ENCODE measurements at regions of chr1 and their contacts with region 1.

Region 1: GRCh38 chr1:235415008-235415904 is 48.0 kb downstream of the TBCE start:
- DNase-seq: peak; percentile 59
- ATAC-seq: peak; percentile 83
- H3K4me3 ChIP-seq: no peak overlapping the region
- H3K27ac ChIP-seq: no peak overlapping the region
- H3K4me1 ChIP-seq: peaks cover 5 to 21% of the 10 kb centered on the region in 2 experiments; a peak in 3 of 4 replicates
- H3K27me3 ChIP-seq: no peaks in the 10 kb centered on the region
- CTCF ChIP-seq: peak; percentile 77 to 84 (median 80)
- POLR2A ChIP-seq: no peak
- RAD21 ChIP-seq: peak; percentile 79

Region 2: DNA sequence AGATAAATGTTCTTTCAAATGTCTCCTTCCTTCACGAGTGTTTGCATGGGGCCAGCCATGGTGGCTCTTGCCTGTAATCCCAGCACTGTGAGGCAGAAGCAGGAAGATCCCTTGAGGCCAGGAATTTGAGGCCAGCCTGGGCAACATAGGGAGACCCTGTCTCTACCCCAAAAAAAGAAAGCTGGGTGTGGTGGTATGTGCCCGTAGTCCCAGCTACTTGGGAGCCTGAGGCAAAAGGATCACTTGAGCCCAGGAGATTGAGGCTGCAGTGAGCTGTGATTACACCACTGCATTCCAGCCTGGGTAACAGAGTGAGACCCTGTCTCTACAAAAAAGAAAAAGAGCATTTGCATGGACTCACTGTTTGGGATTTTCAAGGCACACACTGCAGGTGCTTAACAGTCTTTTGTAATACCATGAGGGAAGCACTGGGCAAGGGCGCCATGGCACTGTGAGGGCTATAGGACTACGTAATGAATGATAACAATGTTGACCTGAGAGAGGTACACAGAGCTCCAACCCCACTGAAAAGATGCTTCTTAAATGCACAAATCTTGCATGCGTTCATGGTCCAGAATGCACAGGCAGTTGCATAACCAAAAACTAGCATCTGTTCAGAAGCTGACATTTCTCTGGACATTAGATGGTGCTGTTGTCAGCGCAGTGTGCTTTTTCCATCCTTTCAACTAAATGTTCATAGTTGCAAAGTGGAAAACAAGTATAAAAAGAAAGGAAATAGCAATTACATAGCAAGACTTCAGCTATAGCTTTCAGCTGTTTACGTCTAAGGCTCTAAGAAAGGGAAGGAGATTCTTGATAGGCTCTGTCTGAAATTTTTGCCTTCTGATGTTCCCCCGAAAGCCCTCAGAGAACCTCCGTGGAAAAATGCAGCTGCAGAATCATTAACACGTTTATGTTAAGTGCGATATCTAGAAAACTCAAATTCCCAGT is 928.5 kb before region 1 on chr1:
- CTCF ChIA-PET with region 1: no interaction called
- POLR2A ChIA-PET with region 1: no interaction called
- RAD21 ChIA-PET with region 1: no interaction called
- intact Hi-C with region 1: loop called (anchors 1 kb)
- DNase-seq: no peak
- ATAC-seq: peak; percentile 64; the same call in 1 of the 2 replicates
- H3K4me3 ChIP-seq: no peak overlapping the region
- H3K27ac ChIP-seq: no peak overlapping the region
- H3K4me1 ChIP-seq: no peaks in the 10 kb centered on the region
- H3K27me3 ChIP-seq: peaks cover 10% of the 10 kb centered on the region
- CTCF ChIP-seq: peak; percentile 46 to 64 (median 49); a peak in 4 of 6 replicates
- POLR2A ChIP-seq: no peak
- RAD21 ChIP-seq: peak; percentile 82

Region 3: GRCh38 chr1:235105051-235106043 is 309.9 kb before region 1 on chr1:
- CTCF ChIA-PET with region 1: interaction called, 36 read pairs
- POLR2A ChIA-PET with region 1: no interaction called
- RAD21 ChIA-PET with region 1: no interaction called
- intact Hi-C with region 1: loop called (anchors 1 kb)
- DNase-seq: no peak
- ATAC-seq: no peak
- H3K4me3 ChIP-seq: no peak overlapping the region
- H3K27ac ChIP-seq: no peak overlapping the region
- H3K4me1 ChIP-seq: peaks cover 4 to 14% of the 10 kb centered on the region in 2 experiments; a peak in 3 of 4 replicates
- H3K27me3 ChIP-seq: no peaks in the 10 kb centered on the region
- CTCF ChIP-seq: no peak
- POLR2A ChIP-seq: no peak
- RAD21 ChIP-seq: no peak

Region 4: GRCh38 chr1:235160957-235161684 is 254.1 kb before region 1 on chr1 and contains the start of gene RBM34:
- CTCF ChIA-PET with region 1: interaction called, 5 read pairs
- POLR2A ChIA-PET with region 1: no interaction called
- RAD21 ChIA-PET with region 1: no interaction called
- intact Hi-C with region 1: loop called (anchors 10 kb)
- DNase-seq: peak; percentile 71
- ATAC-seq: peak; percentile 92
- H3K4me3 ChIP-seq: peak within 1 kb of the TSS; percentile 73 to 80
- H3K27ac ChIP-seq: peak within 1 kb of the TSS; percentile 64
- H3K4me1 ChIP-seq: peaks cover 0 to 15% of the 10 kb centered on the region in 2 experiments; a peak in 2 of 4 replicates
- H3K27me3 ChIP-seq: no peaks in the 10 kb centered on the region
- CTCF ChIP-seq: 0 out of 6 replicates have a peak, but pooled peaks of 1 of the 3 experiments have one; percentile 14
- POLR2A ChIP-seq: peak; percentile 97
- RAD21 ChIP-seq: no peak
- total RNA-seq, gene RBM34: 82.0 TPM

Region 5: DNA sequence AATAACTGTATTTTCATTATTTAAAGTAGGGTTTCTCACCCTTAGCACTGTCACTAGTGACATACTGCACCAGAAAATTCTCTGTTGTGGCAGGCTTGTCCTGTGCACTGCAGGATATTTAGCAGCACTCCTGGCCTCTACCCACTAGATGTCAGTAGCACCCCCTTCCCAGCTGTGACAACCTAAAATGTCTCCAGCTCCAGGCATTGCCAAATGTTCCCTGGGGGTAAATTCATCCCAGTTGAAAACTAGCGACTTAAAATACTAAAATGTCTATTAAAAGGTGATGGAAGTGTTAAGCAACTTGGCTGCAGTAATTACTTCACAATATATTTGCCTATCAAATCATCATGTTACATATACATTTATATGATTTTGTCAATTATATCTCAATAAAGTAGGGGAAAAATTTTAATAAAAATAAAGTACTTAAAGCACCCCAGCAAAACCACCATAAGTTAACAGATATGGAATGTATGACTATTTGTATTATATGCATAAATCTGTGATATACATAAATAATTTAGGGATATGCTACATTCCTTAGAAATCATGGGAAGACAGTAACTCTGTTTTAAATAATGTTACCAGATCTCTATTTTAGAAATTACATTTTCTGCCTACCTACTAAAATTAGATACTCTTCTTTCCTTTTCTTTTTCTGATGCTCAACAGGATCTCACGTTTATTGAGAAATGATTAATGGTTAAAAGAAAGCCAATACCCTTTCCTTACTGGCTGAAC is 161.9 kb before region 1 on chr1:
- CTCF ChIA-PET with region 1: interaction called, 47 read pairs
- POLR2A ChIA-PET with region 1: no interaction called
- RAD21 ChIA-PET with region 1: interaction called in 1 of 2 experiments, 4 read pairs
- intact Hi-C with region 1: loop called (anchors 1 kb)
- DNase-seq: peak; percentile 54
- ATAC-seq: peak; percentile 100
- H3K4me3 ChIP-seq: no peak overlapping the region
- H3K27ac ChIP-seq: no peak overlapping the region
- H3K4me1 ChIP-seq: no peaks in the 10 kb centered on the region
- H3K27me3 ChIP-seq: no peaks in the 10 kb centered on the region
- CTCF ChIP-seq: peak; percentile 84 to 89 (median 87)
- POLR2A ChIP-seq: no peak
- RAD21 ChIP-seq: peak; percentile 89

Region 6: DNA sequence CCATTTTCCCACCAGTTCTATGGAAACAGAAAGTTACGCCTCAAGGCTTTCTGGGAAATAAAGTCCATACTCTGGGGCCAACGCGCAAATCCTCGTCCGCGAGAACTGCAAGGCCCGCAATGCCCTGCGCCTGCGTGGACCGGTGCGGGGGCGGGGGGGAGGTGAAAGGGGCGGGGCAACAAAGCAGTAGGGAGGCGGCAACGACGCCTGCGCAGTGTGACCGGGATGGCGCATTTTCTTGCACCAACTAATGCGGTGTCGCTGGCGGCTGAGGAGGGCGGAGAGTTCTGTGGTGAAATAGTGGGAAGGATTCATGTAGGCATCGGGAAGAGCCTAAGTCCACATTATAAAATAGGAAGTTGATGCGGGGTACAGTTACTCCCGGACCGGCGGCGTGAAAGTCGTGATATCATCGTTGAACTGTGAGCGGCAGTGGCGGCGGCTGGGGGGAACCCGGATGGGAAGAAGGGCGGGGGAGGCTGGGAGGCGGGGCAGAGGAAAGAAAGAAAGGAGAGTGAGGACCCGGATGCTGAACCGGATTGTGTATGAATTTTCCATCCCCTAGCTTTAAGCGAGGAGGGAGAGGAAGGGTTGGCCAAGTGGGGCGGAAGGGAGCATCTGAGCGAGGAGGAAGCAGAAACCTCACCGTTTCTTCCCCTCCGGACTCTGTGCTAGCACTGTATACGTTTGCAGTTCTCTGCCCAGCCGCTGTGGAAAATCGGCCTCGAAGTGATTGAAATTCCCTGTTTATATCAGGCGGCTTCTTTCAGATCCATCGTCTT is 86.7 kb before region 1 on chr1 and contains the start of gene GGPS1:
- CTCF ChIA-PET with region 1: interaction called, 4 read pairs
- POLR2A ChIA-PET with region 1: interaction called, 4 read pairs
- RAD21 ChIA-PET with region 1: interaction called in 1 of 2 experiments, 5 read pairs
- intact Hi-C with region 1: loop called (anchors 2 kb)
- DNase-seq: peak; percentile 100
- ATAC-seq: peak; percentile 67
- H3K4me3 ChIP-seq: peak within 1 kb of the TSS; percentile 95 to 99
- H3K27ac ChIP-seq: peak within 1 kb of the TSS; percentile 92
- H3K4me1 ChIP-seq: peaks cover 3 to 22% of the 10 kb centered on the region in 2 experiments; a peak in 3 of 4 replicates
- H3K27me3 ChIP-seq: no peaks in the 10 kb centered on the region
- CTCF ChIP-seq: peak in 1 of 3 experiments; percentile 20; a peak in 1 of 6 replicates
- POLR2A ChIP-seq: peak; percentile 94
- RAD21 ChIP-seq: no peak
- total RNA-seq, gene GGPS1: 30.6 TPM

Region 7: GRCh38 chr1:235866205-235866912 is 451.1 kb after region 1 on chr1 and contains the start of gene LYST:
- CTCF ChIA-PET with region 1: no interaction called
- POLR2A ChIA-PET with region 1: no interaction called
- RAD21 ChIA-PET with region 1: no interaction called
- intact Hi-C with region 1: no loop called
- DNase-seq: no peak
- ATAC-seq: peak; percentile 62
- H3K4me3 ChIP-seq: peak within 1 kb of the TSS; percentile 66 to 69
- H3K27ac ChIP-seq: peak within 1 kb of the TSS; percentile 46
- H3K4me1 ChIP-seq: peaks cover 9 to 20% of the 10 kb centered on the region in 2 experiments; a peak in 2 of 4 replicates
- H3K27me3 ChIP-seq: no peaks in the 10 kb centered on the region
- CTCF ChIP-seq: peak; percentile 23 to 47 (median 36); a peak in 2 of 6 replicates
- POLR2A ChIP-seq: no peak
- RAD21 ChIP-seq: peak; percentile 70
- total RNA-seq, gene LYST: 6.6 TPM

Measured in HCT116 (cell line).